ENCODE measurements at regions of chr14 and their contacts with region 1.

Region 1: GRCh38 chr14:55107766-55108554 is 21.1 kb upstream of the LGALS3 start:
- DNase-seq: peak; percentile 91 to 94 (median 94)
- H3K4me3 ChIP-seq: no peak overlapping the region
- H3K27ac ChIP-seq: peak overlapping the region; percentile 88 to 93
- H3K4me1 ChIP-seq: peaks cover 32% of the 10 kb centered on the region
- H3K27me3 ChIP-seq: no peaks in the 10 kb centered on the region
- CTCF ChIP-seq: no peak
- EP300 ChIP-seq: peak; percentile 94
- POLR2A ChIP-seq: peak; percentile 57

Region 2: DNA sequence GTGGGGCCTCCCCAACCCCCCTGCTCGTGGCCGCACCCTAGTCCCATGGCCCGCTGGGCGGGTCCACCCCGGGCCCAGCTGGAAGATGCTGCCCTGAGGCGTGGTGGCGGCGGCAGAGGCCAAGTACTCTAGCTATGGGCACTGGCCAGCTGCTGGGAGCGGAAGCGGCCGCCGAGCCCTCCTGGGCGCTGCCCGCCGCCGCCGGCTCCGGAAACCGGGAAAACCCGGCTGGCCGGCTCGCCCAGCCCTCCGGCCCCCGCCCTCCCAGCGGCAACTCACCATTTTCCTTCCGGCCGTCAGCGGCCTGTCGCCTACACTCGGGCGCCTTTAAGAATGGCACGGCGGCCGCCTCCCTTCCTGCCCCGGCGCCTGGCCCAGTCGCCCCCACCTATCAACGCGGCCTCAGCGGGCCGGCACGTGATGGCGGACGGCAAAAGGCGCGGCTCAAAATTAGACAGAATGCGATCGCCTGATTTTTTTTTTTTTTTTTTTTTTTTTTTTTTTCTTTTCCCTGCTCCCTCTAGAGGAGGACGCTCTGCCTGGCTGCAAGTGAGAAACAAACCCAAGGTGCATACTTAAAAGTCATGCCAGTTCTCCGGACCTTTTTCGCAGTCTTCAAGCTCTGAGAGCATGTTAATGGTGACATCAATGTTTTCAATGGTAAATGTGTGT is 619.2 kb before region 1 on chr14 and contains the start of gene GMFB:
- intact Hi-C with region 1: no loop called
- DNase-seq: peak; percentile 89 to 95 (median 92)
- H3K4me3 ChIP-seq: peak within 1 kb of the TSS; percentile 93
- H3K27ac ChIP-seq: peak within 1 kb of the TSS; percentile 81 to 89
- H3K4me1 ChIP-seq: peaks cover 9% of the 10 kb centered on the region
- H3K27me3 ChIP-seq: no peaks in the 10 kb centered on the region
- CTCF ChIP-seq: peak in 1 of 3 donors; percentile 29
- EP300 ChIP-seq: no peak
- POLR2A ChIP-seq: peak; percentile 70
- total RNA-seq, gene GMFB: 29.3 to 65.5 (median 33.8) TPM

Region 3: DNA sequence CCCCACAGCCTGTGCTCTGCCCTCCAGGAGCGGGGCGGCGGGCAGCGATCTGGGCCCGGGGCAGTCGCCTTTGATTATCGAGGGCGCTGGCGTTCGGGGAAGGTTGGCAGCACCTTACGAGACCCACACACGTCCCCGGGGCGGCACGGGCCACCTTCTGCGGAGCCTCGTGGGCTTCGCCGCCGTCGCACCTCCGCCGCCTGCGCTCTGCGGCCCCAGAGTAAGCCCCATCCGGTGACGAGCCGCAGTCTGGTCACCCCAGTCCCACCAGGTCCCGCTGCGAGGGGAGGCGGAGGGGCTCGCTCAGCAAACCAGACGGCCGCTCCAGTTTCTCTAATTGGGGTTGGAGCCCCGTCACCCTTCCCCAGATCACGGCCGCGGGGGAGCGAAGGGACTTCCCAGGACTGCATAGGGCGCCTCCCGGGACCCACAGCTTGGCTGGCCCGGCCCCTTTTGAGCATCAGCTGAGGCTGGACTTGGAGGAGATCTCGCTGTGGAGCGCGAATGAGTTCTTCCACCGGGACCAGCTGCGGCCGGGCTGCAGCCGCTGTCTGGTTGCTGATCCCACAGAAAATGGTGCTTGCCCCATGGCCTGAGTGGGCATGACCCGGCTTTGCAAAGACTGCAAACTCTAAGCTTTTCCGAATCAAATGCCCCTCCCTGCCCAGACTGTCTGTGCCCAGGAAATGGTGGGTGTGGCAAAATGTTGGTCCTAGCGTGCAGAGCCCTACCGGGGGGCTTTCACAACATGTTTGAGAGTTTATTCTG is 21.7 kb after region 1 on chr14:
- intact Hi-C with region 1: loop called in 1 of 4 experiments (anchors 2 kb)
- DNase-seq: peak; percentile 61 to 79 (median 73)
- H3K4me3 ChIP-seq: peak overlapping the region; percentile 75
- H3K27ac ChIP-seq: peak overlapping the region; percentile 94 to 97
- H3K4me1 ChIP-seq: peaks cover 22% of the 10 kb centered on the region
- H3K27me3 ChIP-seq: no peaks in the 10 kb centered on the region
- CTCF ChIP-seq: no peak
- EP300 ChIP-seq: no peak
- POLR2A ChIP-seq: no peak

Region 4: DNA sequence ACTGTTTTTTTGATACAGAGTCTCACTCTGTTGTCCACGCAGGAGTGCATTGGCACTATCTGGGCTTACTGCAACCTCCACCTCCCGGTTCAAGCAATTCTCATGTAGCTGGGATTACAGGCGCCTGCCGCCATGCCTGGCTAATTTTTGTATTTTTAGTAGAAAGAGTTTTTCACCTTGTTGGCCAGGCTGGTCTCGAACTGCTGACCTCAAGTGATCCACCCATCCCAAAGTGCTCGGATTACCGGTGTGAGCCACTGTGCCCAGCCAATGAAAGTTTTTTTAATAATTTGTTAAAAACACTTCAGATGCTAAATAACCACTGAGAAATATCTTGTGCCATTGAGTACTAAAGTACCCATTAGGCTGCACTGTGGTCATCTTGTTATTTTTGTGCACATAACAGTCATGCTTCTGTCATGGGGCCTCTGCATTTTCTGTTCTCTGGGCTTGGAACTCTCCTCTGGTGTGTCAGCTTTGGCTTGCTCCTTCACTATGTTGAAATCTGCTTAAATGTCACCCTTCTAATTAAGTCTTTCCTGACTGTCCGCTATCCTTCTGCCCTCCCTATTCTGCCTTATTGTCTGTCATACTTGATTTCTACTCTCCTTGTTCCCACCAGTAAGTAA is 577.1 kb after region 1 on chr14:
- intact Hi-C with region 1: no loop called
- DNase-seq: no peak
- H3K4me3 ChIP-seq: no peak overlapping the region
- H3K27ac ChIP-seq: no peak overlapping the region
- H3K4me1 ChIP-seq: no peaks in the 10 kb centered on the region
- H3K27me3 ChIP-seq: no peaks in the 10 kb centered on the region
- CTCF ChIP-seq: no peak
- EP300 ChIP-seq: no peak
- POLR2A ChIP-seq: no peak

Measured in ovary (tissue), 10 donors.